GM12878 (cell line): ENCODE measurements at regions of chr14 and their contacts with region 1.

Region 1: GRCh38 chr14:59964251-59965007 is 44.5 kb downstream of the LRRC9 start:
- DNase-seq: no peak
- ATAC-seq: peak; percentile 42
- H3K4me3 ChIP-seq: 0 out of 2 replicates have a peak overlapping the region, but pooled peaks have one; percentile 6
- H3K27ac ChIP-seq: peak overlapping the region; percentile 47
- H3K4me1 ChIP-seq: peaks cover 6% of the 10 kb centered on the region; the same call in 1 of the 2 replicates
- H3K27me3 ChIP-seq: no peaks in the 10 kb centered on the region
- CTCF ChIP-seq: no peak
- EP300 ChIP-seq: no peak
- POLR2A ChIP-seq: no peak
- RAD21 ChIP-seq: no peak

Region 2: GRCh38 chr14:59632381-59632780 is 332.0 kb before region 1 on chr14:
- CTCF ChIA-PET with region 1: interaction called, 17 read pairs
- POLR2A ChIA-PET with region 1: no interaction called
- RAD21 ChIA-PET with region 1: interaction called, 3 read pairs
- SMC1A ChIA-PET with region 1: interaction called, 6 read pairs
- in situ Hi-C with region 1: no loop called
- intact Hi-C with region 1: no loop called
- DNase-seq: no peak
- ATAC-seq: peak; percentile 81
- H3K4me3 ChIP-seq: no peak overlapping the region
- H3K27ac ChIP-seq: no peak overlapping the region
- H3K4me1 ChIP-seq: no peaks in the 10 kb centered on the region
- H3K27me3 ChIP-seq: peaks cover 3 to 4% of the 10 kb centered on the region in 2 experiments; a peak in 3 of 4 replicates
- CTCF ChIP-seq: peak; percentile 52 to 61 (median 56); a peak in 5 of 6 replicates
- EP300 ChIP-seq: no peak
- POLR2A ChIP-seq: no peak
- RAD21 ChIP-seq: peak; percentile 64

Region 3: GRCh38 chr14:59939828-59940227 is 24.6 kb before region 1 on chr14:
- CTCF ChIA-PET with region 1: interaction called, 24 read pairs
- POLR2A ChIA-PET with region 1: interaction called, 4 read pairs
- RAD21 ChIA-PET with region 1: interaction called, 18 read pairs
- SMC1A ChIA-PET with region 1: interaction called, 36 read pairs
- in situ Hi-C with region 1: no loop called
- intact Hi-C with region 1: no loop called
- DNase-seq: peak; percentile 50
- ATAC-seq: peak; percentile 91
- H3K4me3 ChIP-seq: no peak overlapping the region
- H3K27ac ChIP-seq: no peak overlapping the region
- H3K4me1 ChIP-seq: peaks cover 4% of the 10 kb centered on the region; the same call in 1 of the 2 replicates
- H3K27me3 ChIP-seq: no peaks in the 10 kb centered on the region
- CTCF ChIP-seq: no peak
- EP300 ChIP-seq: peak in 1 of 2 experiments; percentile 29; a peak in 1 of 4 replicates
- POLR2A ChIP-seq: no peak
- RAD21 ChIP-seq: no peak

Region 4: GRCh38 chr14:59986556-59987059 is 22.2 kb after region 1 on chr14:
- CTCF ChIA-PET with region 1: interaction called, 12 read pairs
- POLR2A ChIA-PET with region 1: no interaction called
- RAD21 ChIA-PET with region 1: interaction called, 3 read pairs
- SMC1A ChIA-PET with region 1: interaction called, 6 read pairs
- in situ Hi-C with region 1: no loop called
- intact Hi-C with region 1: no loop called
- DNase-seq: no peak
- ATAC-seq: no peak
- H3K4me3 ChIP-seq: no peak overlapping the region
- H3K27ac ChIP-seq: no peak overlapping the region
- H3K4me1 ChIP-seq: no peaks in the 10 kb centered on the region
- H3K27me3 ChIP-seq: no peaks in the 10 kb centered on the region
- CTCF ChIP-seq: no peak
- EP300 ChIP-seq: no peak
- POLR2A ChIP-seq: no peak
- RAD21 ChIP-seq: no peak

Region 5: GRCh38 chr14:60175246-60175902 is 210.9 kb after region 1 on chr14:
- CTCF ChIA-PET with region 1: interaction called, 155 read pairs
- POLR2A ChIA-PET with region 1: interaction called, 4 read pairs
- RAD21 ChIA-PET with region 1: interaction called, 110 read pairs
- SMC1A ChIA-PET with region 1: interaction called, 158 read pairs
- in situ Hi-C with region 1: loop called (anchors 5 kb)
- intact Hi-C with region 1: no loop called
- DNase-seq: no peak
- ATAC-seq: peak; percentile 82
- H3K4me3 ChIP-seq: no peak overlapping the region
- H3K27ac ChIP-seq: no peak overlapping the region
- H3K4me1 ChIP-seq: no peaks in the 10 kb centered on the region
- H3K27me3 ChIP-seq: no peaks in the 10 kb centered on the region
- CTCF ChIP-seq: no peak
- EP300 ChIP-seq: no peak
- POLR2A ChIP-seq: no peak
- RAD21 ChIP-seq: no peak

Region 6: GRCh38 chr14:60220084-60220483 is 255.7 kb after region 1 on chr14:
- CTCF ChIA-PET with region 1: no interaction called
- POLR2A ChIA-PET with region 1: no interaction called
- RAD21 ChIA-PET with region 1: no interaction called
- SMC1A ChIA-PET with region 1: no interaction called
- in situ Hi-C with region 1: no loop called
- intact Hi-C with region 1: no loop called
- DNase-seq: peak; percentile 82
- ATAC-seq: peak; percentile 72
- H3K4me3 ChIP-seq: no peak overlapping the region
- H3K27ac ChIP-seq: peak overlapping the region; percentile 49
- H3K4me1 ChIP-seq: peaks cover 28% of the 10 kb centered on the region
- H3K27me3 ChIP-seq: no peaks in the 10 kb centered on the region
- CTCF ChIP-seq: no peak
- EP300 ChIP-seq: no peak
- POLR2A ChIP-seq: no peak
- RAD21 ChIP-seq: no peak

Region 7: DNA sequence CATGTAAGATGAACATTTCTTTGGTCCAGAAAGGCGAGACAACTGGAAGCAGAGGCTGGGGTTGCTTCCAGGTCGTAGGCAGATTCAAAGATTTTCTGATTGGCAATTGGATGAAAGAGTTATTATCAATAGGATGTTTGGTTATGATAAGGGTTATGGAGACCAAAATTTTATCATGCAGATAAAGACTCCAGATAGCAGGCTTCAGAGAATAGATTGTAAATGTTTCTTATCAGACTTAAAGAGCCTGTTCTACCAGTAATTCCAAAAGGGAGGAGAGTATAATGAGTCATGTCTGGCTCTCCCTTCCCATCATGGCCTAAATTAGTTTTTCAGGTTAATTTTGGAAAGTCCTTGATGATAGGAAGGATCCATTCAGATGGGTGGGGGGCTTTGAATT is 465.8 kb after region 1 on chr14:
- CTCF ChIA-PET with region 1: no interaction called
- POLR2A ChIA-PET with region 1: no interaction called
- RAD21 ChIA-PET with region 1: no interaction called
- SMC1A ChIA-PET with region 1: no interaction called
- in situ Hi-C with region 1: no loop called
- intact Hi-C with region 1: no loop called
- DNase-seq: no peak
- ATAC-seq: no peak
- H3K4me3 ChIP-seq: no peak overlapping the region
- H3K27ac ChIP-seq: no peak overlapping the region
- H3K4me1 ChIP-seq: no peaks in the 10 kb centered on the region
- H3K27me3 ChIP-seq: no peaks in the 10 kb centered on the region
- CTCF ChIP-seq: no peak
- EP300 ChIP-seq: no peak
- POLR2A ChIP-seq: no peak
- RAD21 ChIP-seq: no peak

Region 8: DNA sequence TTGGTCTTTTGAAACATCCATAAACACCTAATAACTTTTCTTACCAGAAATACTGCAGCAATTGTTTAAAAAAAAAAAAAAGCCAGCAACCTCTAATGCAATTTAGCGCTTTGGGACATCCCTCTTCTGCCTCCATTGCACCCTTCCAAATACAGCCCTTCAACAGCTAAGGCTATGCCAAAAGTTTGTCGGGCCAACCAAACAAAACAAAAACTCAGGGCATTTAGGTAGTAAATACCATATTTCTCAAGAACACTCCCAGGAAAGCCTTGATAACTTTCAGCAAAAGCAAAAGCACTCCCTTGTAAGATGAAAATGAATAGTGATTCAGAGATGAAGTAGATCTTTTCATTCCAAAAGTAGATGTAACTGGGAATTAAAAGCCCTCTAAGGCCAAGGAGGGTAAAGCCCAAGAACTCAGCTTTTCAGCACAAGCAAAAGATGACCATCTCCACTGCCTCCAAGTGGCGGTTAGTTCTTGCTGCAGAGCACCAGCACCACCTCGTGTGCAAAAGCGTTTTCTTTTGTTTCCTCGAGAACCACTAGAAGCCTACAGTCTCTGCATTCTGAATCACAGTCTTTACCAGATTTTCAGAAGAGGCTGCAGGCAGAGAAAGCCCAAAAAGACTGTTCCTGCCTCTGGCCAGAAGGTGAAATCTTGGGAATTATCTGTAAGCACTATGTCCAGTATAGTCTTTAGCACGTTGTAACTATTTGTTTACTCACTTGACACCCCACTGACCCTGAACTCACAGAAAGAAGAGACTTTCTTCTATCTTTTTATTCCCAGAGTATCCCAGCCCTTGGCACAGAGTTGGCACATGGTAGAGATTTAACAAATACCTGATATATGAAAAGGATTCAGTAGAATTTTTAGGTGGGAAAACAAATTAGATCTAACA is 597.7 kb after region 1 on chr14:
- CTCF ChIA-PET with region 1: interaction called, 15 read pairs
- POLR2A ChIA-PET with region 1: no interaction called
- RAD21 ChIA-PET with region 1: no interaction called
- SMC1A ChIA-PET with region 1: interaction called, 6 read pairs
- in situ Hi-C with region 1: no loop called
- intact Hi-C with region 1: loop called (anchors 10 kb)
- DNase-seq: peak; percentile 19
- ATAC-seq: peak; percentile 94
- H3K4me3 ChIP-seq: no peak overlapping the region
- H3K27ac ChIP-seq: no peak overlapping the region
- H3K4me1 ChIP-seq: 0 out of 2 replicates have a peak, but pooled peaks cover 5% of the 10 kb centered on the region
- H3K27me3 ChIP-seq: no peaks in the 10 kb centered on the region
- CTCF ChIP-seq: peak; percentile 72 to 90 (median 79)
- EP300 ChIP-seq: no peak
- POLR2A ChIP-seq: no peak
- RAD21 ChIP-seq: peak; percentile 89

Region 9: DNA sequence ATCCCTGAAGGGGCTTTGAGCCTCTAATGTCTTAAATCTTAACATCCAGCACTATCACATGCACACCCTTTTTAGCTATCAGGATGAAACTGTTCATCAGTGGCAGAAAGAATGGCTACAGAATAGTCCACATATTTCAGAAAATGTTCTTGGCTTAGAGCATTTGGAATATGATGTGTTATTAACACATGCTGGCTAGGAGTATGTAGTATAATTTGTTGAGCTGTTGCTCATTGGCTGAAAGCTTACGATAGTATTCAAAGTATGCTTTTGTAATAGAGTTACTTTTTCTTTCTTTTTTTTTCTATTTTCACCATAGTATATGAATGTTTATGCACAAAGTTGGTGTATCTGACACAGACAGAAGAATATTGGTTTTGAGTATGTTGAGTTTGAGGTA is 825.2 kb after region 1 on chr14:
- CTCF ChIA-PET with region 1: no interaction called
- POLR2A ChIA-PET with region 1: no interaction called
- RAD21 ChIA-PET with region 1: no interaction called
- SMC1A ChIA-PET with region 1: no interaction called
- in situ Hi-C with region 1: no loop called
- intact Hi-C with region 1: no loop called
- DNase-seq: no peak
- ATAC-seq: no peak
- H3K4me3 ChIP-seq: no peak overlapping the region
- H3K27ac ChIP-seq: no peak overlapping the region
- H3K4me1 ChIP-seq: no peaks in the 10 kb centered on the region
- H3K27me3 ChIP-seq: no peaks in the 10 kb centered on the region
- CTCF ChIP-seq: no peak
- EP300 ChIP-seq: no peak
- POLR2A ChIP-seq: no peak
- RAD21 ChIP-seq: no peak